ENCODE measurements at regions of chr3 and their contacts with region 1.

Region 1: DNA sequence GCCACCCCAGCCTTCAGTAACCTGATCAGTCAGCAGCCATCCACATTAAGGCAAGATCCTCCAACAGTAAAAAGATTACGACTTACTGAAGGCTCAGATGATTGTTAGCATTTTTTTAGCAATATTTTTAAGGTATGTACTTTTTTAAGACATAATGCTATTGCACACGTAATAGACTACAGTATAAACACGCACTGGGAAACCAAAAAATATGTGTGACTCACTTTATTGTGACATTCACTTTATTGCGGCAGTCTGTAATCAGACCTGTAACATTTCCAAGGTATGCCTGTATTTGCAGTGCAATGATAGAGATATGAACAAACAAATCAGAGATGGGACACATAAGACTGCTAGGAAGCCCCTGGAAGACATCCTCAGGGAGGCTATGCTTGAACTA is 225.4 kb upstream of the UBE2E1 start:
- DNase-seq: peak; percentile 97
- ATAC-seq: peak; percentile 64
- H3K4me3 ChIP-seq: peak overlapping the region; percentile 16; the same call in 1 of the 2 replicates
- H3K27ac ChIP-seq: peak overlapping the region; percentile 69
- H3K4me1 ChIP-seq: peaks cover 38% of the 10 kb centered on the region
- H3K27me3 ChIP-seq: no peaks in the 10 kb centered on the region
- CTCF ChIP-seq: no peak

Region 2: GRCh38 chr3:23324745-23325144 is 255.6 kb before region 1 on chr3:
- CTCF ChIA-PET with region 1: no interaction called
- POLR2A ChIA-PET with region 1: no interaction called
- intact Hi-C with region 1: loop called (anchors 1 kb)
- DNase-seq: peak; percentile 73
- ATAC-seq: peak; percentile 76
- H3K4me3 ChIP-seq: peak overlapping the region; percentile 31
- H3K27ac ChIP-seq: peak overlapping the region; percentile 29
- H3K4me1 ChIP-seq: peaks cover 43% of the 10 kb centered on the region
- H3K27me3 ChIP-seq: no peaks in the 10 kb centered on the region
- CTCF ChIP-seq: no peak

Region 3: DNA sequence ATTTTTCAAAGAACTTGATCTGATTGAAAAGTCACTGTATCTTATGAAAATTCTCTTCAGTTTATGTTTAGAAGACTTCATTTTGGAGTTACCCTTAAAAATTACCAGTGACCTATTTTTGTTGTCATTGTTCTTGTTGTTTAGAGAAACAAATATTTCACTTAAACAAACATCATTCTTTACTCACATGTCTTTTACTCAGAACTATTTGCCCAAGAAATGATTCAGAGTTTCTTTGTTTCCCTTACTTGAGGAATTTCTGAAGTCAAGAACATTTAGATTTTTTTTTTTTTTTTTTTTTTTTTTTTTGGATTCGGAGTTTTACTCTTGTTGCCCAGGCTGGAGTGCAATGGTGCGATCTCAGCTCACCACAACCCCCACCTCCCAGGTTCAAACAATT is 34.2 kb before region 1 on chr3:
- CTCF ChIA-PET with region 1: no interaction called
- POLR2A ChIA-PET with region 1: no interaction called
- intact Hi-C with region 1: loop called (anchors 2 kb)
- DNase-seq: peak; percentile 59
- ATAC-seq: peak; percentile 50
- H3K4me3 ChIP-seq: no peak overlapping the region
- H3K27ac ChIP-seq: peak overlapping the region; percentile 13; the same call in 1 of the 2 replicates
- H3K4me1 ChIP-seq: peaks cover 15% of the 10 kb centered on the region
- H3K27me3 ChIP-seq: no peaks in the 10 kb centered on the region
- CTCF ChIP-seq: no peak

Region 4: DNA sequence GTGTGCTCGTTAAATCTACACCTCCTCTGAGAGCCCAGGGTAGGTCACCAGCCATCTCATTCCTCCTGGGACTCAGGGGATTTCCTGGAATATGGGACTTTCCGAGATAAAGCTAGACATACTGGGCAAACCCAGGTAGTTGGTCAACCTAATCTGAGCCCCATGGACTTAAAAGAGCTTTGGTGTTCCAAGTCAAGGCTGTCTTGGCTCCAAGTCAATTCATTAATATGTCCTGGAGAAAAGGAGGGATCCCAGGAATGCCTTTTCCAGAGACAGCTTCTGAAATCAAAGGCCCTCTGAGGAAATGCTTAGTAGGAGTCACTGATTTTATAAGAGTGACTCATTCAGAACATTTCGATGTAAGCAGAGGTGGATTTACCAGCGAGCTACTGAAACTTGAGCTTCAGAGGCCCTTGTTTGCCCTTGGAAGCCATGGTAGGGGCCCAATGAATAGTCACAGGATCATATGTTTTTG is 88.1 kb after region 1 on chr3:
- CTCF ChIA-PET with region 1: no interaction called
- POLR2A ChIA-PET with region 1: no interaction called
- intact Hi-C with region 1: loop called (anchors 1 kb)
- DNase-seq: peak; percentile 97
- ATAC-seq: peak; percentile 54
- H3K4me3 ChIP-seq: peak overlapping the region; percentile 7; the same call in 1 of the 2 replicates
- H3K27ac ChIP-seq: peak overlapping the region; percentile 96
- H3K4me1 ChIP-seq: peaks cover 74% of the 10 kb centered on the region
- H3K27me3 ChIP-seq: no peaks in the 10 kb centered on the region
- CTCF ChIP-seq: no peak

Region 5: GRCh38 chr3:23800731-23801130 is 220.4 kb after region 1 on chr3:
- CTCF ChIA-PET with region 1: no interaction called
- POLR2A ChIA-PET with region 1: no interaction called
- intact Hi-C with region 1: loop called (anchors 2 kb)
- DNase-seq: peak; percentile 50
- ATAC-seq: peak; percentile 61
- H3K4me3 ChIP-seq: no peak overlapping the region
- H3K27ac ChIP-seq: no peak overlapping the region
- H3K4me1 ChIP-seq: peaks cover 15% of the 10 kb centered on the region
- H3K27me3 ChIP-seq: no peaks in the 10 kb centered on the region
- CTCF ChIP-seq: peak; percentile 47; the same call in 1 of the 2 replicates

Measured in PC-3 (cell line).